Activated B cell treated with CpG ODN at 0.5 μM for 24 hours (primary cell): ENCODE measurements at regions of chr2 and their contacts with region 1.

Region 1: DNA sequence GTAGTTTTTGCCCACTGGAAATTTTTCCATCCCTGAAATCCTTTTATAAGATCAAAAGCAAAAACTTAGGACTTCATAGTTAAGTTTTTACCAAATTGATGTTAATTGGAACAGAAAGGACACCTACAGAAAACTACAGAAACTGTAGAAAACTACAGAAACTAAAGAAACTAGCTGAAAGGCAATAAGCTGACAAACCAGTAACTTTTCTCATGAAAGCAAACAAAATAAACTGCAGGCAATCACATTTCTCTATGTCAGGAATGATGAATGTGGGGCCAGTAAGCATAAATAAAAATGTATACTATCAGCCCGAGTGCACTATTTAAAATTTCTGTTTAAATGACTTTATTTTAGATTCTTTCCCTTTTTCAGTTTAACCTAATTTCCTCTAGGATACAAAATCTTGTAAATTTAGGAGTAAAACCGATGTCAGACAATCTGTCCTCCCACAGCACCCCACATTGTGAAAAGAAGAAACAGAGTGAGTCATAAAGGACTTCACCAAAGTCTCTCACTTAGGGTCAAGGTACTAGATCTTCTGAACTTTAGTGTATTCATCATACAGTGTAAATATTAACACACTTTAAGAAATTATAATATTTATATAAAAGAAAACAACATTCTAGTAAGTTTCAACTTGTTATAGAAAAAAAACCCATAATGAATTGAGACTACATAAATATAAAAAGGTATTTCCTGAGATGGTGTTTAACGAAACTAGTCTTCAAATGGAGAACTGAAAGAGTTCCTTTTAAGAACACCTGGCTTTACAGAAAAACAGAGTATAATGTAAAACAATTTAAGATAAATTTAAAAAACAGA is 46.6 kb downstream of the USP40 start:
- DNase-seq: no peak
- ATAC-seq: peak; percentile 86
- H3K4me3 Mint-ChIP-seq: peak overlapping the region; percentile 61
- H3K27ac Mint-ChIP-seq: peak overlapping the region; percentile 95
- H3K4me1 Mint-ChIP-seq: peaks cover 61% of the 10 kb centered on the region
- H3K27me3 Mint-ChIP-seq: no peaks in the 10 kb centered on the region
- CTCF ChIP-seq: no peak

Region 2: GRCh38 chr2:233566141-233566960 is 46.4 kb after region 1 on chr2 and contains the start of gene USP40:
- CTCF ChIA-PET with region 1: no interaction called
- POLR2A ChIA-PET with region 1: interaction called, 4 read pairs
- intact Hi-C with region 1: loop called (anchors 2 kb)
- DNase-seq: peak; percentile 59
- ATAC-seq: peak; percentile 82
- H3K4me3 Mint-ChIP-seq: peak within 1 kb of the TSS; percentile 98
- H3K27ac Mint-ChIP-seq: peak within 1 kb of the TSS; percentile 98
- H3K4me1 Mint-ChIP-seq: peaks cover 9% of the 10 kb centered on the region
- H3K27me3 Mint-ChIP-seq: no peaks in the 10 kb centered on the region
- CTCF ChIP-seq: no peak
- total RNA-seq, gene USP40: 25.5 and 30.4 TPM in 2 replicates

Region 3: GRCh38 chr2:233593201-233593600 is 73.2 kb after region 1 on chr2:
- CTCF ChIA-PET with region 1: no interaction called
- POLR2A ChIA-PET with region 1: no interaction called
- intact Hi-C with region 1: no loop called
- DNase-seq: no peak
- ATAC-seq: no peak
- H3K4me3 Mint-ChIP-seq: no peak overlapping the region
- H3K27ac Mint-ChIP-seq: no peak overlapping the region
- H3K4me1 Mint-ChIP-seq: peaks cover 9% of the 10 kb centered on the region
- H3K27me3 Mint-ChIP-seq: peaks cover 7% of the 10 kb centered on the region
- CTCF ChIP-seq: no peak

Region 4: GRCh38 chr2:233668605-233669260 is 148.7 kb after region 1 on chr2:
- CTCF ChIA-PET with region 1: no interaction called
- POLR2A ChIA-PET with region 1: no interaction called
- intact Hi-C with region 1: no loop called
- DNase-seq: no peak
- ATAC-seq: no peak
- H3K4me3 Mint-ChIP-seq: no peak overlapping the region
- H3K27ac Mint-ChIP-seq: no peak overlapping the region
- H3K4me1 Mint-ChIP-seq: no peaks in the 10 kb centered on the region
- H3K27me3 Mint-ChIP-seq: peaks cover 21% of the 10 kb centered on the region
- CTCF ChIP-seq: no peak